Mammary epithelial cell (primary cell): ENCODE measurements at regions of chr3 and their contacts with region 1.

Region 1: DNA sequence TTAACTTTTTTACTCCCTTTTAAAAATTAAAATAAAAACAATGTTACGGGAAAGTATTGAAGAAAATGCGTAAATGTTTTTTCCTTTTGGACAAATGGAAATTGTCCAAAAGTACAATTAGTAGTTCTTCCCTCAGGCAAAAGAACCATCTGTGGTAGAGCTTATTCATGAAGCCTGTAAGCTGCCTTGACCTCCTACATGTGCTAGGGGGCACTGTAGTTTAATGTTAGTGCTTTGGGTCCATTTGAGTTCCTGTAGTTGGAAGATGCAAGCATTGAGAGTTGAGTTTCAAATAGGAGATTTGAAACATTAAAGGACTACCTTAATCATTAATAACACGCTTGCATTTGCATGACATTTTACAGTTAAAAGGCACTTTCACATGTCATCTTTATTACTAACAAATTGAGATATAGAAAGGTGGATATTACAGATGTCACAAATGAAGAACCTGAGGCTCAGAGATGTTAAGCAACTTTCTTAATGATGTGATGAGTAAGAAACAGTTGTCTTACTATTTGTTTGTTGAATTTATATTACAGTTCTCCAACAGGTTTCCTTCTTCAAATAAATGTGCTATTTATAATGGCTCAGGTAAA is 1.8 kb upstream of the ZNF385D start:
- DNase-seq: peak; percentile 63
- H3K4me3 ChIP-seq: no peak overlapping the region
- H3K27ac ChIP-seq: no peak overlapping the region
- H3K4me1 ChIP-seq: peaks cover 8% of the 10 kb centered on the region
- H3K27me3 ChIP-seq: no peaks in the 10 kb centered on the region
- CTCF ChIP-seq: peak; percentile 65 to 75

Region 2: GRCh38 chr3:21310161-21310560 is 442.7 kb before region 1 on chr3:
- CTCF ChIA-PET with region 1: no interaction called
- dilution Hi-C with region 1: no loop called
- in situ Hi-C with region 1: no loop called
- intact Hi-C with region 1: no loop called
- DNase-seq: no peak
- H3K4me3 ChIP-seq: no peak overlapping the region
- H3K27ac ChIP-seq: no peak overlapping the region
- H3K4me1 ChIP-seq: no peaks in the 10 kb centered on the region
- H3K27me3 ChIP-seq: no peaks in the 10 kb centered on the region
- CTCF ChIP-seq: no peak

Region 3: GRCh38 chr3:21664996-21665395 is 87.9 kb before region 1 on chr3:
- CTCF ChIA-PET with region 1: no interaction called
- dilution Hi-C with region 1: no loop called
- in situ Hi-C with region 1: no loop called
- intact Hi-C with region 1: loop called (anchors 5 kb)
- DNase-seq: no peak
- H3K4me3 ChIP-seq: no peak overlapping the region
- H3K27ac ChIP-seq: no peak overlapping the region
- H3K4me1 ChIP-seq: peaks cover 13% of the 10 kb centered on the region
- H3K27me3 ChIP-seq: no peaks in the 10 kb centered on the region
- CTCF ChIP-seq: no peak

Region 4: DNA sequence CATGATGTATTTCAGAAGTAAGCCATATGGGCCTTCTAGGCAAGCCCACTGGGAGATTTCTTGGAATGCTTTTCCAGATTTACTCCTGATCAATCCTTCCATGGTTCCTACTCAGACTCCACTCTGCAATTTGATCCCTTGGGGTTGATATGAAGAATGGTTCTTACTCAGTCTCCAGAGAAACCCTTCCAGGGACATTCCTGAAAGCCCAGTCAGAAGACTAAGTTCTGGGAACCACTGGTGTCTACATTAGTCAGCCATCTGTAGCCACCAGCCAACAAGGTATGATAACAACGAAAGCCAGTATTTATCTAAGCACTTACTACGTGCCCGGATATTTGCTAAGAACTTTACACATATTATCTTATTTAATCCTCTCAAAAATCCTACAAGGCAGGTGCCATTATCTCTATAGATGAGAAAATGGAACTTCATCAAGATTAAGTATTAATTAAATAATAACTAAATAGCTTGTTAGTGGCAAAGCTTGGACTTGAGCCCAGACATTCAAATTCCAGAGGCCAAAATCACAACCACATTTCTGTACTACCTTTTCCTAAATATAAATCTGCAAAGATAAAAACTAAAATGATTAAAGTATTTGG is 34.6 kb before region 1 on chr3:
- CTCF ChIA-PET with region 1: no interaction called
- dilution Hi-C with region 1: no loop called
- in situ Hi-C with region 1: no loop called
- intact Hi-C with region 1: loop called (anchors 2 kb)
- DNase-seq: peak; percentile 95
- H3K4me3 ChIP-seq: no peak overlapping the region
- H3K27ac ChIP-seq: peak overlapping the region; percentile 89
- H3K4me1 ChIP-seq: peaks cover 33% of the 10 kb centered on the region
- H3K27me3 ChIP-seq: no peaks in the 10 kb centered on the region
- CTCF ChIP-seq: no peak

Region 5: DNA sequence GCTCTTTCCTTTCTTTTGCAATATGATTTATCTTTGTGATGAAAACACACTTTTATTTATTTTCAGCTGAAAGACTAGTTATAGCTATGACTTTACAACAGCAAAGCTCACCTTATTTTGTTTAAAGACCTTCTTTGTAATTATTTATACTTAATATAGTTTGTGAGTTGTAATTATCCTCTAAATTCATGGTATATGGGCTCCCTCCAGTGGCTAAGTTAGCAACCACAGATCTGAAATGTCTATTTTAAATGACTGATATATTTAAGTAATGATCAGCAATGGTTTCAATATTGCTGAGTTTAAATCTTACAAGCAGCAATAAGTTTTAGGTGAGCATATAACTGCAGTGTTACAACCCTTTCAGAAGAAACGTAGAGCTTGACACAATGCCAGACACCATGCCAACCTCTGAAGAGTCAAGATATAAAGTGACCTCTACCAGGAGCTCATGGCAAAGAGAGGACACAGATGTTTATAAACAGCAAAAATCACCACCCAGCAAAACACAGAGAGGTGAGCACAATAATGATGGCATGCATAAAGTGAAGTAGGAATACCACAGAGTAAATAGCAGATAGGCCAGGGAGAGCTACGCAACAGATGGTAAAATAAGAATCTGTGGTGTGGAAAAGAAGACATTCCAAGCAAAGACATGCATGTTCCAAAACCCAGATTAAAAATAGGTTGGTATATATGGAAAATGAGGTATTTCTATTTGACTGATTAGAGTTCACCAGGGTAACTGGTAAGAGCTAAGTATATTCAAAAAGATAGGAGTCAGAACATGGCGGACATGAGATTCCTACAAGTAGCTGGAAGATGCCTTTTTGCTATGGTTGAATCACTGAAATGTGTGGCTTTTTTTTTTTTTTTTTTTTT is 141.9 kb after region 1 on chr3:
- CTCF ChIA-PET with region 1: interaction called, 4 read pairs
- dilution Hi-C with region 1: no loop called
- in situ Hi-C with region 1: no loop called
- intact Hi-C with region 1: loop called (anchors 1 kb)
- DNase-seq: no peak
- H3K4me3 ChIP-seq: no peak overlapping the region
- H3K27ac ChIP-seq: no peak overlapping the region
- H3K4me1 ChIP-seq: no peaks in the 10 kb centered on the region
- H3K27me3 ChIP-seq: no peaks in the 10 kb centered on the region
- CTCF ChIP-seq: peak; percentile 59